HAP-1 (cell line): ENCODE measurements at regions of chr10 and their contacts with region 1.

Region 1: GRCh38 chr10:95841661-95842498 is 65.9 kb upstream of the CC2D2B start:
- DNase-seq: peak; percentile 25 to 56
- H3K4me3 ChIP-seq: no peak overlapping the region
- H3K4me1 ChIP-seq: no peaks in the 10 kb centered on the region
- H3K27me3 ChIP-seq: 0 out of 2 replicates have a peak, but pooled peaks cover 2% of the 10 kb centered on the region

Region 2: DNA sequence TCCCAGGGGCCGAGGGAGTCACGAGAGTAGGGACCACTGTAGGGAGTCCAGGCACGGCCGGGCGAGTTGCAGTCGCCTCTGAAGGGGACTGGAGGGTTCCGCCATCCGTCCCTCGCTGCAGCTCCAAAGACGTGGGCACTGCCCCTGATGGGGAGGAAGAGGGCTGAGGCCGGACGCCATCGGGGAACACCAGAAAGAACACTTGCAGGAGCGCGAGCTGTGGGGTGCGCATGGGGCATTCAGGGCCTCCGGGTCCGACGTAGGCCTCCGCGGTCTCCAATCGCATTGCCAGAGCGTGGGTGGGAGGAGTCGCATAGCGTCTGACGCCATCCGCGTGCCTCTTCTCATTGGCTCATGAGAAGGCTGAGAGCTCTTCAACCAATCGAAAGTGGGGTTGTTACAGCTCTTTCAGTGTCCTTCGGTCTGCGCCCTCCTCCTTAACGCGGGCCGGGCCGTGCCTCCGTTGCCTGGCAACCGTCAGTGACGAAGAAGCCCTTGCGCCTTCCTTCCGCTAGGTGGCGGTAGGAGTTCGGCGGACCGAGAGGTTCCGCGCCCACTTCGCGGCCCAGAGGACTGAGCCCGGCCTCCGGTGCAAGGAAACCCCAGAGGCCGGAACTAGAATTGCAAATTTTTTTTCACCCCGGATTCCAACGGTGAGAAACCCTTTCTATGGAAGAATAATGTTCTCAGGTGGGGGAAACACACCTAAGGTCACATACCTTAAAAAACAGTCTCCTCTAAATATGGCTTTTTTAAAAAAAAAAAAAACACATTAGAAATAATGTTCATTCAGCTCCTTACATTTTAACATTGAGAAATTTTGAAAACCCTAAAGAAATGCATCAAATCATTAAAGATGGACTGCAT is 148.0 kb before region 1 on chr10 and contains the start of gene TCTN3:
- in situ Hi-C with region 1: loop called (anchors 10 kb)
- DNase-seq: peak; percentile 95 to 98
- H3K4me3 ChIP-seq: peak within 1 kb of the TSS; percentile 90
- H3K4me1 ChIP-seq: peaks cover 7% of the 10 kb centered on the region
- H3K27me3 ChIP-seq: no peaks in the 10 kb centered on the region